Heart left ventricle (tissue), 16 donors: ENCODE measurements at regions of chr13 and their contacts with region 1.

Region 1: DNA sequence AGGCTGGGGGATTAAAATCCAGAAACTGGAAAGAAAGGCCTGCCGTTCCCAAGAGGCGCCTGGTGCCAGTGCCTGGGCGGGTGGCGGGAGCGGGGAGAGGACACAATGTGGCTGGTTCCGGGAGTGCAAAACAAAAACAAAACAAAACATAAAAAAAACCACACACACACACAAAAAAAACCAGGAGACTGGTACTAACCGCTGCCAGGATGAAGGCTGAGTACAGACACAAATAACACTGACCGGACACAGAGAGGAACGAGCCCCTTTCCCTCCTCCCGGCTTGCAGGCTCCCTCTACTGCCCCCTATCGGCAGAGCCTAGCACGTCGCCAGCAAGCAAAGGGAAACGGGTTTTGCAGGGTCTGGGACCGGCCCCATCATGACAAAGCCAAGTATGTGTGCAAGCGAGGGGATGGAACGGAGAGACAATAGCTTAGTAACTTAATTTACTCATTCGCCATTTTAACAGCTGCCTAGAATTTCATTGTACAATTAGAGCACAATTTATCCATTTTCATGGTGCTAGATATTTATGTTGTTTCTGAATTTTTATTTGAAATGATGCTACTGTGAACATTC is 17.9 kb upstream of the ZDHHC20 start:
- DNase-seq: peak; percentile 82 to 89 (median 83)
- ATAC-seq: peak; percentile 59 to 85 (median 74)
- H3K4me3 ChIP-seq: peak overlapping the region in 11 of 12 donors; percentile 2 to 59 (median 50)
- H3K27ac ChIP-seq: peak overlapping the region in 6 of 12 donors; percentile 13 to 51 (median 41)
- H3K4me1 ChIP-seq: peaks cover 0 to 15% (median 8%) of the 10 kb centered on the region in 12 donors
- H3K27me3 ChIP-seq: no peaks in the 10 kb centered on the region
- CTCF ChIP-seq: peak; percentile 94 to 99 (median 97)
- POLR2A ChIP-seq: no peak

Region 2: DNA sequence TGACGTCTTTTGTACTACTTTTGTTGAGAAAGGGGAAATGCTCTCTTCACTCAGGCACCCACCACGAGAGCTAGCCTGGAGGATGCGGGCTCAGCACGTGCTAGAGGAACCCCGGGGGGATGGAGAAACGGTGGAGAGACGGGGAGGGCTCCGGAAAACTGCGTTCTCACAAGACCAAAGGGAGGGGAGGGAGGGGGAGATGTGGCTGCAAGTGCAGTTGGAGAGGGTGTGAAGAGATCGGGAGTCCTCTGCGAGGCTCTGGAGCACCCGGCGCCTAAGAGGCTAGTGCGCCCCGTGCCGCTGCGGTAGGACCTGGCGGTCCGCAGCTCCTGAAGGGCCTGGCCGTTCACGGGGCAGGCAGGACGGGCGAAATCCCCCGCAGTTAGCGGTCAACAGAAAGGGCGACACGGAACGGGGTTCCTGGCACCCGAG is 531.0 kb before region 1 on chr13:
- intact Hi-C with region 1: loop called (anchors 1 to 10 kb)
- DNase-seq: peak in 3 of 5 donors; percentile 20 to 42 (median 23)
- ATAC-seq: peak in 3 of 4 donors; percentile 37 to 46 (median 38)
- H3K4me3 ChIP-seq: peak overlapping the region in 9 of 12 donors; percentile 10 to 40 (median 28)
- H3K27ac ChIP-seq: no peak overlapping the region
- H3K4me1 ChIP-seq: peaks cover 0 to 15% (median 2%) of the 10 kb centered on the region in 12 donors
- H3K27me3 ChIP-seq: peaks cover 0 to 14% (median 4%) of the 10 kb centered on the region in 9 donors
- CTCF ChIP-seq: no peak
- POLR2A ChIP-seq: no peak

Region 3: DNA sequence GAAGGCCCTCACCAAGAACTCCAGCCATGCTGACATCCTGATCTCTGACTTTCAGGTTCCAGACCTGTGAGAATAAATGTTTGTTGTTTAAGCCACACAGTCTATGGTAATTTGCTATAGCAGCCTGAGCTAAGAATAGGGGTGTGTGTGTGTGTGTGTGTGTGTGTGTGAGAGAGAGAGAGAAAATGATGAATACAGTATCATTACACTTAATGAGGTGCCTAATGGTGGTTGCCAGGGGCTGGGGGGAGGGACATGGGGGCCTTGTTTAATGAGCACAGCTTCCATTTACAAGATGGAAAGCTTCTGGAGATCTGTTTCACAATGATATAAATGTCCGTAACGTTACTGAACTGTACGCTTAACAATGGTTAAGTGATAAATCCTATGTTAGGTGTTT is 361.8 kb before region 1 on chr13:
- intact Hi-C with region 1: loop called in 6 of 10 experiments (anchors 2 to 5 kb)
- DNase-seq: no peak
- ATAC-seq: no peak
- H3K4me3 ChIP-seq: no peak overlapping the region
- H3K27ac ChIP-seq: no peak overlapping the region
- H3K4me1 ChIP-seq: no peaks in the 10 kb centered on the region
- H3K27me3 ChIP-seq: no peaks in the 10 kb centered on the region
- CTCF ChIP-seq: no peak
- POLR2A ChIP-seq: no peak

Region 4: DNA sequence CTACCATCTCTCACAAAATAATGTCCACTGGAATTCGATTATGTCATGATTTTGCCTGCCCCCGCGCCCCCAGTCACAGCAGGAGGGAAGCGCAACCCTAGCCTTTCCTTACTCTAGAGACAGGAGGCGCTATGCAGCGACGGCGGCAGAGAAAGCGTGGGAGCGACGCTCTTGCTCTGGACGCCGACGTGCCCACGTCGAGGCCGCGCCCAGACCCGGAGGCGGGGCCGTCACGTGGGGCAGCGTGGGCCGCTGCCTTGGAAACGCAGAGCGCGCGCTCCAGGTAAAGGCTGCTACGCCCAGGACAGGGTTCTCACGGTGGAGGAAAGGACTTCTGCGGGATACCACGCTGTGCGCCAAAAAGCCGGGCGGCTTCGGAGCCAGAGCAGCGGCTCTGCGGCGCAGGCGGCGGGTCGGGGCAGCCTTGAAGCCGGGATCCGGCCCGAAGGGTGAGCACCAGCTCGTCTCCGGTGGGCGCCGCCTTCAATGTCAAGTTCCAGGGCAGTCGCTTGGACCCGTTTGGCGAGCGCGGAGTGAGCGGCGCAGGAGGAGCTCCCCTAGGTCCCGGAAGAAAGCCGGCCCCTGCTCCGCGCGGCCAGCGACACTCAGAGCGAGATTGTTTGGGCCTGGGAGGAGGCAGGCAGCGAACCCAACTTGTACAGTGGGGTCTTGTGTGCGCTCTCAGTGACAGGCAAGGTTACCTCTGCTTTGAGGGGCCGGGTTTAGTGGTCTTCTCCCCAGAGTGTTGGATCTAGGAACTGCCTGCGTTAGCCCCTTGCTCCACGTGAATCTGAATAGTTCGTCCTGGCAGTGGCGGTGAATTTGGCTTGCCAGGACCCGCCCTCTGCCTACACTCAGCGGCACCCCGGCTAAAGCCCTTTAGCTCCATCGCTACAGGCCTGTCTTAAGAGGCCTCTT is 178.8 kb before region 1 on chr13:
- intact Hi-C with region 1: loop called (anchors 1 to 5 kb)
- DNase-seq: peak; percentile 84 to 91 (median 88)
- ATAC-seq: peak; percentile 98 to 100 (median 100)
- H3K4me3 ChIP-seq: peak overlapping the region; percentile 75 to 100 (median 88)
- H3K27ac ChIP-seq: peak overlapping the region in 11 of 12 donors; percentile 10 to 79 (median 71)
- H3K4me1 ChIP-seq: peaks cover 0 to 24% (median 16%) of the 10 kb centered on the region in 12 donors
- H3K27me3 ChIP-seq: no peaks in the 10 kb centered on the region
- CTCF ChIP-seq: peak; percentile 75 to 99 (median 89)
- POLR2A ChIP-seq: peak in 1 of 2 donors; percentile 33